ENCODE measurements at regions of chr6 and their contacts with region 1.

Region 1: GRCh38 chr6:72272958-72273357 is 348.9 kb upstream of the KCNQ5 start:
- DNase-seq: peak; percentile 72
- H3K4me3 ChIP-seq: no peak overlapping the region
- H3K27ac ChIP-seq: no peak overlapping the region
- H3K4me1 ChIP-seq: peaks cover 15% of the 10 kb centered on the region
- H3K27me3 ChIP-seq: no peaks in the 10 kb centered on the region
- CTCF ChIP-seq: no peak
- POLR2A ChIP-seq: no peak

Region 2: DNA sequence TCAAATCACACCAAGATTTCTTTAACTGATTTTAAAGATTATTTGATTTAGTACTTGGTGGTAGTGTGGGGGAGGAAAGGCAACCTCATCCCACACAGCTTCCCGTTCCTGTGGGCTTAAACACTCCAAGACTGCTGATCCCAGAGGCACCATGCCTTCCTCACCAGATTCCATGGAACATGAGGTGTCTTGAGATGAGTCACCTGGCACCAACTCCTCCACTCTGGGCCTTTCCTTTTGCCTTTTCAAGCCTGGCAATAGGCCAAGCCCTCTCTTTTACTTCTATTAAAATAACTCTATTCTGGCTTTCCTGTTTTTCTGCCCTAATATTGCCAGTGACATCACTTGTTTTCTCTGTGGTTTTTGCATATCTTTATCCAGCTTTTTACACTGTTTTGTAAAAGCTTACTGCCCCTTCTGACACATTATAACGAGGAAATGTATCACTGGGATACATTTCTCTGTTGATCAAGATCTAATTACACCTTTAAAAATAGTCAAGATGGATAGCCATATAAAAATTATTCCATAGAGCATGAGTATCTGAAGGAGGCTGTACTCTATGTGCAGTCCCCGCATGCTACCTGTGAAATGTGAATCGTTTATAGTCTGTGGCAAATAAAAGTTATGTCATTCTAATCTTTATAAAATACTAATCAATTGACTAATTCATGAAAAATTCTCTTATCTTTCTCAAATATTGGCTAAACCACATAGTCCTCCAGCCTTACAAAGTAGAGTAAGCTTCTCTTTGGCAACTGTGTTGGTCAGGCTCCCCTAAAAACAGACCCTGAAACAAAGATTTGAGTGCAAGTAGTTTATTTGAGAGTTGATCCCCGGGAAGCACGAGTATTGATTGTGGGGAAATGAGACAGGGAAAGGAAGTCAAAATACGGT is 91.1 kb after region 1 on chr6:
- CTCF ChIA-PET with region 1: no interaction called
- POLR2A ChIA-PET with region 1: no interaction called
- dilution Hi-C with region 1: no loop called
- intact Hi-C with region 1: loop called (anchors 5 kb)
- DNase-seq: peak; percentile 94
- H3K4me3 ChIP-seq: no peak overlapping the region
- H3K27ac ChIP-seq: peak overlapping the region; percentile 48
- H3K4me1 ChIP-seq: peaks cover 20% of the 10 kb centered on the region
- H3K27me3 ChIP-seq: no peaks in the 10 kb centered on the region
- CTCF ChIP-seq: no peak
- POLR2A ChIP-seq: peak; percentile 39

Measured in endothelial cell of umbilical vein (primary cell).